MCF 10A (cell line): ENCODE measurements at regions of chr20 and their contacts with region 1.

Region 1: GRCh38 chr20:4720041-4720976 is 1.4 kb upstream of the PRND start:
- DNase-seq: peak; percentile 72
- H3K4me3 Mint-ChIP-seq: no peak overlapping the region
- H3K27ac Mint-ChIP-seq: no peak overlapping the region
- H3K4me1 Mint-ChIP-seq: peaks cover 7% of the 10 kb centered on the region
- H3K27me3 Mint-ChIP-seq: no peaks in the 10 kb centered on the region
- CTCF ChIP-seq: peak; percentile 86

Region 2: GRCh38 chr20:4601630-4602296 is 118.5 kb before region 1 on chr20:
- CTCF ChIA-PET with region 1: interaction called, 234 read pairs
- POLR2A ChIA-PET with region 1: interaction called, 7 read pairs
- intact Hi-C with region 1: no loop called
- DNase-seq: peak; percentile 91
- H3K4me3 Mint-ChIP-seq: no peak overlapping the region
- H3K27ac Mint-ChIP-seq: no peak overlapping the region
- H3K4me1 Mint-ChIP-seq: peaks cover 21% of the 10 kb centered on the region
- H3K27me3 Mint-ChIP-seq: no peaks in the 10 kb centered on the region
- CTCF ChIP-seq: no peak

Region 3: GRCh38 chr20:4607287-4607713 is 113.0 kb before region 1 on chr20:
- CTCF ChIA-PET with region 1: interaction called, 234 read pairs
- POLR2A ChIA-PET with region 1: interaction called, 19 read pairs
- intact Hi-C with region 1: loop called (anchors 1 kb)
- DNase-seq: peak; percentile 71
- H3K4me3 Mint-ChIP-seq: no peak overlapping the region
- H3K27ac Mint-ChIP-seq: no peak overlapping the region
- H3K4me1 Mint-ChIP-seq: peaks cover 2% of the 10 kb centered on the region
- H3K27me3 Mint-ChIP-seq: no peaks in the 10 kb centered on the region
- CTCF ChIP-seq: peak; percentile 78

Region 4: GRCh38 chr20:4666001-4666479 is 54.3 kb before region 1 on chr20:
- CTCF ChIA-PET with region 1: interaction called, 13 read pairs
- POLR2A ChIA-PET with region 1: interaction called, 8 read pairs
- intact Hi-C with region 1: no loop called
- DNase-seq: peak; percentile 80
- H3K4me3 Mint-ChIP-seq: peak overlapping the region; percentile 62
- H3K27ac Mint-ChIP-seq: peak overlapping the region; percentile 72
- H3K4me1 Mint-ChIP-seq: peaks cover 32% of the 10 kb centered on the region
- H3K27me3 Mint-ChIP-seq: no peaks in the 10 kb centered on the region
- CTCF ChIP-seq: no peak

Region 5: DNA sequence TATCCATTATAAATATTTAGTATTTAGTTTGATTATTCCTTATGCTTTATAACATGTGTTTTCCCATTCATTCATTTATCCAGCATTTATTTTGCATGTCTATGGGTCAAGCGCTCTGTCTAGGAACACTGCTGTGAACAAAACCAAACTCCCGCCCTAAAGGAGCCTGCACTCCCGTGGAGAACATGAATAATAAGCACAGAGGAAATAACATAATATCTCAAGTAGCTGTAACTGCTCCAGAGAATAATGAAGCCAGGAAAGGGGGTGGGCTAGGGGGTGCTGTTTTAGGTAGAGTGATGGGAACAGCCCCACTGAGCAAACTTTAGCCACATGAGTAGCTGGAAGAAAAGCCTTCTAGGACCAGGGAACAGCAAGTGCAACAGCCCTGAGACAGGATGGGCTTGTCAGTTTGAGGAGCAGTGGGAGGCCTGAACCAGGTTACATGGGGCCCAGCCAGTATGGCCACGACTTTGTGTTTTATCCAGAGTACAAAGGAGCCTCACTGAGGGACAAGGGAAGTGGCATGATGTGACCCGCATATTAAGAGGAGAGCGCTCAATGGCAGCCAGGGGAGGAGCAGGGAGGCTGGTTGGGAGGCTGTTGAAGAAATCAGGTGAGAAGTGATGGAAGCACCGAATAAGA is 23.0 kb before region 1 on chr20:
- CTCF ChIA-PET with region 1: interaction called, 10 read pairs
- POLR2A ChIA-PET with region 1: interaction called, 6 read pairs
- intact Hi-C with region 1: no loop called
- DNase-seq: no peak
- H3K4me3 Mint-ChIP-seq: no peak overlapping the region
- H3K27ac Mint-ChIP-seq: peak overlapping the region; percentile 13
- H3K4me1 Mint-ChIP-seq: peaks cover 27% of the 10 kb centered on the region
- H3K27me3 Mint-ChIP-seq: no peaks in the 10 kb centered on the region
- CTCF ChIP-seq: no peak

Region 6: DNA sequence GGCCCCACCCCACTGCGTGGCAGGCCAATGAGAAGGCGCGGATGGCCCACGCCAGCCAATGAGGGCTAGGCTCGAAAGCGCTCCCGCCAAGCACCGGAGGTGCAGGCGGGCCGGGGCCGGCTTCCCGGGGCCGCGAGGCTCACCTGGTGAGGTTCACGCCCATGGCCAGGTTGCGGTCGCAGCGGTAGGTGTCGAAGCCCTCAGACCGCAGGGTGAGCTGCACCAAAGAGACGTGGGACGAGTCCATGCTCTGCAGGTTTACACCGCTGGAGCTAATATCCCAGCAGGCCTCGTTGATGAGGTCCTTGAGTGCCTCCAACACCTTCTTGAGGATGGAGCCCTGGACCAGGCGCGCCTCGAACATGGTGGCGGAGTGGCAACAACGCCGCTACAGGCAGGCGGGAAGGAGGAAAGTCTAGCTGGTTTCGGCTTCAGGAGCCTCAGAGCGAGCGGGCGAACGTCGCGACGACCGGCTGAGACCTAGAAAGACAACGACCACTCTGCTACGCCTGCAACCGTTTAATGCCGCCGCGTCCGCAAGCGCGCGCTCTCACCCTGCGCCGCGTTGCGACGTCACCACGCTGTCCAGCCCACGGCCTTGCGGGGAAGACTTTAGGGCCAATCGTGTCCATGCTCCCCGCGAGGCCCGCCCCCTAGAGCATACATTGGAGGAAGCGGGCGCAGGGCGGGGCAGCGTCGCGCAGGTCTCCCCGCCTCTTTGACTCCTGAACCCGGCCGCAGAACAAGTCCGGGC is 399.3 kb after region 1 on chr20 and contains the start of gene PCNA:
- CTCF ChIA-PET with region 1: no interaction called
- POLR2A ChIA-PET with region 1: no interaction called
- intact Hi-C with region 1: no loop called
- DNase-seq: peak; percentile 98
- H3K4me3 Mint-ChIP-seq: peak within 1 kb of the TSS; percentile 90
- H3K27ac Mint-ChIP-seq: peak within 1 kb of the TSS; percentile 92
- H3K4me1 Mint-ChIP-seq: peaks cover 21% of the 10 kb centered on the region
- H3K27me3 Mint-ChIP-seq: no peaks in the 10 kb centered on the region
- CTCF ChIP-seq: no peak
- total RNA-seq, gene PCNA: 38.2 and 45.5 TPM in 2 replicates